ENCODE measurements at regions of chr7 and their contacts with region 1.

Region 1: GRCh38 chr7:6106140-6106904 is 75.1 kb downstream of the ANKRD61 start:
- DNase-seq: peak; percentile 41 to 58 (median 52)
- H3K4me3 ChIP-seq: peak overlapping the region; percentile 44 to 67
- H3K4me3 Mint-ChIP-seq: peak overlapping the region; percentile 87 to 98 (median 94)
- H3K27ac ChIP-seq: peak overlapping the region; percentile 86
- H3K27ac Mint-ChIP-seq: peak overlapping the region; percentile 88 to 98 (median 96)
- H3K4me1 ChIP-seq: peaks cover 30% of the 10 kb centered on the region
- H3K4me1 Mint-ChIP-seq: peaks cover 23 to 40% (median 32%) of the 10 kb centered on the region in 4 donors
- H3K27me3 ChIP-seq: no peaks in the 10 kb centered on the region
- H3K27me3 Mint-ChIP-seq: no peaks in the 10 kb centered on the region

Region 2: GRCh38 chr7:5892498-5892897 is 213.8 kb before region 1 on chr7:
- CTCF ChIA-PET with region 1: no interaction called
- POLR2A ChIA-PET with region 1: no interaction called
- intact Hi-C with region 1: no loop called
- DNase-seq: no peak
- H3K4me3 ChIP-seq: no peak overlapping the region
- H3K4me3 Mint-ChIP-seq: no peak overlapping the region
- H3K27ac ChIP-seq: no peak overlapping the region
- H3K27ac Mint-ChIP-seq: no peak overlapping the region
- H3K4me1 ChIP-seq: no peaks in the 10 kb centered on the region
- H3K4me1 Mint-ChIP-seq: peaks cover 0 to under 1% (median 0%) of the 10 kb centered on the region in 4 donors
- H3K27me3 ChIP-seq: no peaks in the 10 kb centered on the region
- H3K27me3 Mint-ChIP-seq: no peaks in the 10 kb centered on the region

Region 3: DNA sequence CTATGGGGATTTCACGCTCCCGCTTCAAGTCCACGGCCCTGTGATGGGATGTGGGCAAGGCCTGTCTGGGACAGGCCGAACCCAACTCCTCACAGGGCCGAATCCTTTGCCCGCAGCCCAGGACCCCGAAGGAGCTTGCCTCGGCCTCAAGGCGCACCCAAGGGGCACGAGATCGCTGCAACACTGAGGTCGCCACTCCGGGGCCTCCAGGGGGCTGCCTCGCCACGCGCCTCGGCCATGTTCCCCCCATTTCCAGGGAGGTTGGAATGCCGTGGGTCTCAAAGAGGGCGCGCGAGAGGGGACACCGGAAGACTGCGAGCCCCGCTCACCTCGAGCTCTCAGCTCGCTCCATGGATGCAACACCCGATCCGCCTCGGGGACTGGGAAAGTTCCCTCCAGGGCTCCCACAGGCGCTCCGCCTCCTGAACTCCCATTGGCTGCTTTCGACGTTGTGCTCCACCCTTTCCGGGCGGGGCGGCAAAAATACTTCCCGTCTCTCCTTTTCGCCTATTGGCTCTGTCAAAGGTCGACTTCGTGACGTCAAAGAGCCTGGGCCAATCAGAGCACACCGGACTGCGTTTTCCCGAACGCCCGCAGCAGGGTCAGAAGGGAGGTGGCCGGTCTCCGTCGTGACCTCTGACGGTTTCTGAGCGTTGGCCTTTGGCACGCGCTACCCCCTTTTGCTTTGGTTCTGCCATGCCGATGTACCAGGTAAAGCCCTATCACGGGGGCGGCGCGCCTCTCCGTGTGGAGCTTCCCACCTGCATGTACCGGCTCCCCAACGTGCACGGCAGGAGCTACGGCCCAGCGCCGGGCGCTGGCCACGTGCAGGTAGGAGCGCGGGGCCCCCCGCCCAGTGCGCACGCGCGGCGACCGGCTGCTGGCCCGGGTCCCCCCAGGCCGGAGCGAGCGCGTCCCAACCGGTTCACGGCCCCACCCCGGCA is 97.4 kb before region 1 on chr7 and contains the starts of genes AIMP2 and PMS2:
- CTCF ChIA-PET with region 1: interaction called, 9 read pairs
- POLR2A ChIA-PET with region 1: no interaction called
- intact Hi-C with region 1: loop called (anchors 1 kb)
- DNase-seq: peak; percentile 93 to 97 (median 94)
- H3K4me3 ChIP-seq: peak within 1 kb of the TSS; percentile 70 to 73
- H3K4me3 Mint-ChIP-seq: peak within 1 kb of the TSS; percentile 92 to 97 (median 95)
- H3K27ac ChIP-seq: peak within 1 kb of the TSS; percentile 86
- H3K27ac Mint-ChIP-seq: peak within 1 kb of the TSS; percentile 93 to 98 (median 97)
- H3K4me1 ChIP-seq: peaks cover 21% of the 10 kb centered on the region
- H3K4me1 Mint-ChIP-seq: peaks cover 18 to 37% (median 25%) of the 10 kb centered on the region in 4 donors
- H3K27me3 ChIP-seq: no peaks in the 10 kb centered on the region
- H3K27me3 Mint-ChIP-seq: no peaks in the 10 kb centered on the region
- total RNA-seq, gene AIMP2: 10.7 to 10.8 TPM
- total RNA-seq, gene PMS2: 22.7 to 23.2 TPM

Region 4: DNA sequence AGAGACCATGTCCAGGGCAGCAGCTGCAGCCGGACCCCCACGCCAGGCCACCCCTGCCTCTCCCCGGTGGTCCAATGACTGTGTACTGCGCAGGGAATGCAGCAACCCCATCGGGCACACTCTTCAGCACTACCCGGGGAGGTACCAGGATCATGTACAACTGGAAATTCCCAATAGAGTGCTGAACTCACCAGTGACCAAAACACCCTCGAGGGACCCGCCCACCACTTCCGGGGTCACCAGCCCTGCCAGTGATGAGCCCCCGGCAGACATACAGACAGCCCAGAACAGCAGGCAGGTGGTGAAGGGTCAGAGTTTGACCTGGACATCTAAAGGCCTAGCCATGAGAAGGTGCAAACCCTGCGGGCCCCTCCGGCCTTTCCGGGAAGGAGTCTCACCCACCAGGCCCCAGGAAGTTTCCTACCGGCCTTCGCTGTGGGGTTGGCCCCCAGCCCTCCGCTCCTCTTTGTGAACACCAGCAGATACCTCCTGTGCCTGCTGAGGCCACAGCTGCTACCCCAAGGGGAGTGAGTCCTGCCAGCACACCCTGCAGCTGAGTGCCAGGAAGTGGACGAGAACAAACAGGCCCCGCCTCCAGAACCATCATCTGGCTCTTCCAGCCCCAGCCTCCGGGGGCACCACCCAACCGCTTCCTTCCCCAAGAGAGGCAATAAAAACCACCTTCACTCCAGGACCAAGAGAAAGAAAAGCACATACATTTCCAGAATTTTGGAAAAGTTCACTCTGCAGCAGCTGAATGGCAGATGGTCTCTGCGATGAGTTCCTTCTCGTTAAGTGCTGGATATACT is 80.1 kb before region 1 on chr7:
- CTCF ChIA-PET with region 1: interaction called, 14 read pairs
- POLR2A ChIA-PET with region 1: interaction called, 5 read pairs
- intact Hi-C with region 1: no loop called
- DNase-seq: peak; percentile 66 to 74 (median 70)
- H3K4me3 ChIP-seq: peak overlapping the region in 1 of 2 donors; percentile 57
- H3K4me3 Mint-ChIP-seq: peak overlapping the region; percentile 73 to 89 (median 86)
- H3K27ac ChIP-seq: peak overlapping the region; percentile 61
- H3K27ac Mint-ChIP-seq: peak overlapping the region; percentile 72 to 96 (median 95)
- H3K4me1 ChIP-seq: peaks cover 25% of the 10 kb centered on the region
- H3K4me1 Mint-ChIP-seq: peaks cover 10 to 30% (median 16%) of the 10 kb centered on the region in 4 donors
- H3K27me3 ChIP-seq: no peaks in the 10 kb centered on the region
- H3K27me3 Mint-ChIP-seq: no peaks in the 10 kb centered on the region